HEK293T (cell line): ENCODE measurements at regions of chr15 and their contacts with region 1.

Region 1: GRCh38 chr15:82540055-82540983 is at the start of gene RPS17:
- DNase-seq: peak; percentile 100

Region 2: GRCh38 chr15:82554351-82554750 is 14.0 kb after region 1 on chr15:
- CTCF ChIA-PET with region 1: interaction called, 4 read pairs
- POLR2A ChIA-PET with region 1: interaction called, 13 read pairs
- DNase-seq: no peak

Region 3: DNA sequence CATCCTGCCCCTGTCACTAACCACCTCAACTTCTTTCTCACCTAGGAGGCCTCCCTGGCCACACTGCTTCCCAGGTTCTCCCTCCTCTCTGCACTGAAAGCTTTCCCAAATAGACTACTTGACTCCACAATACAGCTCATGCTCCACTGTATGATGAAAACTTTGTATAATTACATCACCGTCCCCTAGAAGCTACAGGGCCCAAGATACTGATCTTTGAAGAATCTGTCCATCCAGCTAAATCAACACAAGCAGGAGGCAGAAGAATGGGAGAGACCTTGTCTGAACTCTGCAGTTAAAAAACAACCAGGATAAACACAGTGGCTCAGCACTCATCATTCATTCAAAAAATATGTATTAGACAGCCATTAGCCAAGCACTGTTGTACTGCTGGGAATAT is 26.4 kb after region 1 on chr15:
- CTCF ChIA-PET with region 1: interaction called, 3 read pairs
- POLR2A ChIA-PET with region 1: interaction called, 24 read pairs
- DNase-seq: no peak

Region 4: DNA sequence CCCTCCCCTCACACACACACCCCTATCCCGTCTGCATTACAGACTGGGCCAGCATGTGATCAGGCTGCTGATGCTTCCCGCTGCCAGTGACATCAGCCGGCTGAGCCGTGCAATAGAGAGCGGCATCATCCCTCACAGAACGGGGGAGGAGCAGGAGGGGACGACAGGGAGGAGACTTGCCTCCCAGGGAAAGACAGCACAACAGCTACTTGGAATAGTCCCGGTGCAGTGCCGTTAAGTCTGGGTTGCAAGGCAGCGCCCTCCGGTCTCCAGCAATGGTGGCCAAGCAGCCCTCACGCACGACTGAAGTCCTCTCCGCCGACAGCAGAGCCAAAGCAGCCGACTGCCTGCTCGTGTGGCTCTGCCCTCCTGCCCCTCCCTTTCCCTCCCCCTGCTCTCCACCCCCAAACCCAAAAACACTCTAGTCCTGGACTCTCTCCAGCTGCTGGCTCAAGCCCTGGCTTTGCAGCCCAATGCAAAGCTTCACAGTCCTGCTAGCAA is 31.5 kb after region 1 on chr15:
- CTCF ChIA-PET with region 1: interaction called, 4 read pairs
- POLR2A ChIA-PET with region 1: interaction called, 24 read pairs
- DNase-seq: peak; percentile 59

Region 5: GRCh38 chr15:82709421-82710207 is 169.3 kb after region 1 on chr15 and contains the start of gene AP3B2:
- CTCF ChIA-PET with region 1: no interaction called
- POLR2A ChIA-PET with region 1: interaction called, 14 read pairs
- DNase-seq: peak; percentile 94

Region 6: DNA sequence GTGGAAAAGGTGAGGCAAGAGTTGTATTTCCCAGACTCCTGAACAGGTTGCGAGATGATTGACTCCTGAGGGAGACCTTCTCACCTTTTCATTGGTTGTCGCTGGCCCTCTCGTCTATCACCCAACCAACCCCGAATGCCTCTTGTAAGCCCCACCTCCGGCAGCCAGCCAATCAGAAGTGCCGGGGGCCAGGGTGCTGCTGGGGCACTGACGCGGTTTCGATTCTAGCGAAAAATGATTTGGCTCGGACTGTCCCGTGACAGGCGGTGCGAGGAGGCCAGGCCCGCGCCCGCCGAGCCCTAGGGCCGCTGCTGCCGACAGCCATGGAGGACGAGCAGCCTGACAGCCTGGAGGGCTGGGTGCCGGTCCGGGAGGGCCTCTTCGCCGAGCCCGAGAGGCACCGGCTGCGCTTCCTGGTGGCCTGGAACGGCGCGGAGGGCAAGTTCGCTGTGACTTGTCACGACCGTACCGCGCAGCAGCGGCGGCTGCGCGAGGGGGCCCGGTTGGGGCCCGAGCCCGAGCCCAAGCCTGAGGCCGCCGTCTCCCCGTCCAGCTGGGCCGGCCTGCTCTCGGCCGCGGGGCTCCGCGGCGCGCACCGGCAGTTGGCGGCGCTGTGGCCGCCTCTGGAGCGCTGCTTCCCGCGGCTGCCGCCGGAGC is 269.2 kb after region 1 on chr15 and contains the start of gene WHAMM:
- CTCF ChIA-PET with region 1: no interaction called
- POLR2A ChIA-PET with region 1: interaction called, 30 read pairs
- DNase-seq: peak; percentile 98